Activated CD4-positive, alpha-beta memory T cell treated with anti-CD3 and anti-CD28 coated beads for 36 hours (primary cell): ENCODE measurements at regions of chr9 and their contacts with region 1.

Region 1: DNA sequence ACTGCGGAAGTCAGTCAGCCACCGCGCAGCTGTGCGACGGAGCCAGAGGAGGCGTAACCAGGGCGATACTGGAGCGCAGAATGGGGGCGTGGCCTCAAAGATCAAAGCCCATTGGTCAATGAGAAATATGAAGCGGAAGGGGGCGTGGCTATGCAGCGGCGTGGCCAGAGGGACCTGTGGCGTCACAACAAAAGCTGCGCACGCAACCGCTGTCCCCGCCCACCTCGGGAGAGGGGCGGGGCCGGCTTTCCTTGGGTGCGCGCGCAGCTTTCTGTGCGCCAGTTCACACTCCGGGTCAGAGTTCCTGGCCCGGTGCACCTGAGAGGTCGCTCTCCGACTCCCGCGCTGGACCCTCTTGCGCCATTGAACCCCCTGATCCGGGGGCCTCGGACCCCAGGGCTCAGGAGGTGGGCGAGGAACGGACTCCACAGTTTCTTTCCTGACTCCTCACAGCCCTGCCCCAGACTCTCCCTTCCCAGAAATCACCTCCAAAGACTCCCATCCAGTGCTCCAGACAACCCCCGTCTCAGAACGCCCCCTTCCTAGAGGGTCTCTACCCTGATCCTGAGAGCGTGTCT is at the starts of genes GOLGA2 and SWI5:
- DNase-seq: peak; percentile 100
- H3K4me3 Mint-ChIP-seq: peak within 1 kb of the TSS; percentile 97
- H3K27ac Mint-ChIP-seq: peak within 1 kb of the TSS; percentile 79
- H3K4me1 Mint-ChIP-seq: peaks cover 27% of the 10 kb centered on the region
- H3K27me3 Mint-ChIP-seq: no peaks in the 10 kb centered on the region
- total RNA-seq, gene GOLGA2: 34.4 to 42.9 TPM
- total RNA-seq, gene SWI5: 15.2 to 15.5 TPM

Region 2: GRCh38 chr9:128159784-128160602 is 116.1 kb before region 1 on chr9 and contains the start of gene BBLN:
- CTCF ChIA-PET with region 1: no interaction called
- POLR2A ChIA-PET with region 1: no interaction called
- intact Hi-C with region 1: loop called (anchors 1 kb)
- DNase-seq: peak; percentile 97
- H3K4me3 Mint-ChIP-seq: peak within 1 kb of the TSS; percentile 74
- H3K27ac Mint-ChIP-seq: peak within 1 kb of the TSS; percentile 82
- H3K4me1 Mint-ChIP-seq: peaks cover 24% of the 10 kb centered on the region
- H3K27me3 Mint-ChIP-seq: no peaks in the 10 kb centered on the region
- total RNA-seq, gene BBLN: 86.9 to 90.1 TPM

Region 3: DNA sequence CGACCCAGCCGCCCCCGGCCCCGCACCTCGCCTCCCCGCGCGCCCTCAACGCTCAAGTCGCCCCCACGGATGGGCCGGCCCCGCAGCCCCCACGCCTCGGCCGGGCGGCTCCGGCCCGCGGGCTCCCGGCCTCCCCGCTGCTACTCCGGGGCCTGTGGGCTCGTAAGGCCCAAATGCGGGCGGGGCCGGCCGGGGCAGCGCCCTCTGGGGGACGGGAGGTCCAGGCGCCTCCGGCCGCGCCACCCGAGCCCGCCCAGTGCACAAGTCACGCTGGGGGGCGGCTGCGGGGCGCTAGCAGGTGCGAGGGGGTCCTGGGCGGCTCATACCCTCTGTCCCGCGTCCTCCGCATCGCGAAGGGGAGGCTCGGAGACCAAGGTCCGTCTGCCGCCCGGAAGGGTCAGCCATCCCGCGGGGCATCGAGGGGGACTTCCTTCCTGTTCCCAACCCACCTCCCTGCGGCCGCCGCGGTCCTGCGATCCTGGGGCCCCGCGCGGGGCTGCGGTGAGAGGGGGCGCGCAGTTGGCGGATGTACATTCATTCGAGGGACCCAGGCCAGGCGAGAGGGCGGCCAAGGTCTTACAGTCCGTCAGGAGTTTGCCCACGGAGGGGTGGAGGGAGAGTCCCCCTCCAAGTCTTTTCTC is 84.6 kb before region 1 on chr9 and contains the start of gene CIZ1:
- CTCF ChIA-PET with region 1: no interaction called
- POLR2A ChIA-PET with region 1: no interaction called
- intact Hi-C with region 1: loop called (anchors 5 kb)
- DNase-seq: peak; percentile 76
- H3K4me3 Mint-ChIP-seq: peak within 1 kb of the TSS; percentile 99
- H3K27ac Mint-ChIP-seq: peak within 1 kb of the TSS; percentile 86
- H3K4me1 Mint-ChIP-seq: peaks cover 33% of the 10 kb centered on the region
- H3K27me3 Mint-ChIP-seq: no peaks in the 10 kb centered on the region
- total RNA-seq, gene CIZ1: 95.4 to 105 TPM

Region 4: DNA sequence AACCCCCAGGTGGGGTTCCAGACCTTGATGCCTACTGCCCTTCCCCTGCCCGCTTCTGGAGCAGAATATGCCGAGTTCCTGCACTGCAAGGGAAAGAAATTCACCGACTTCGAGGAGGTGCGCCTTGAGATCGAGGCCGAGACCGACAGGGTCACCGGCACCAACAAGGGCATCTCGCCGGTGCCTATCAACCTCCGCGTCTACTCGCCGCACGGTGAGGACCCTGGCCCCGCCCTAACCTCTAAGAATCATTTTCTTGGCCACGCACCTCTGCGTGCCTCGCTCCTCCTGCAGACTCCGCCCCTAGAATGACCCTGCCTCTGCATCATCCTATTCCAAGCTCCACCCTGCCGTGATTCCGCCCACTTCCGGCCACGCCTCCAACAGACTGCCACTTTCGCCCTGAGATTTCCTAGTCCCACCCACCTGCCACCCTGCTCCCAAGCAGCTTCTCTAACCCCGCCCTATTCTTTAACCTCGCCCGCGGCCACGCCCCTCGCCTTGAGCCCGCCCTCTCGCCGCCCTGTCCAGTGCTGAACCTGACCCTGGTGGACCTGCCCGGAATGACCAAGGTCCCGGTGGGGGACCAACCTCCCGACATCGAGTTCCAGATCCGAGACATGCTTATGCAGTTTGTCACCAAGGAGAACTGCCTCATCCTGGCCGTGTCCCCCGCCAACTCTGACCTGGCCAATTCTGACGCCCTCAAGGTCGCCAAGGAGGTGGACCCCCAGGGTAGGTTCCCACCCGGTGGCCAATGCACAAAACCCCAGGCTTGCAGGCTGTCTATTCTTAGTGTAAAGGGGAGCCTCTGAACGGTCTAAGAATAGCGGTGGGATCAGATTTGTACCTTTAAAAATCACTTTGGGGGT is 57.3 kb before region 1 on chr9:
- CTCF ChIA-PET with region 1: no interaction called
- POLR2A ChIA-PET with region 1: no interaction called
- intact Hi-C with region 1: loop called (anchors 1 kb)
- DNase-seq: peak; percentile 99
- H3K4me3 Mint-ChIP-seq: peak overlapping the region; percentile 70
- H3K27ac Mint-ChIP-seq: no peak overlapping the region
- H3K4me1 Mint-ChIP-seq: peaks cover 11% of the 10 kb centered on the region
- H3K27me3 Mint-ChIP-seq: peaks cover 3% of the 10 kb centered on the region

Region 5: GRCh38 chr9:128249908-128250838 is 25.9 kb before region 1 on chr9:
- CTCF ChIA-PET with region 1: interaction called, 5 read pairs
- POLR2A ChIA-PET with region 1: no interaction called
- intact Hi-C with region 1: loop called (anchors 2 kb)
- DNase-seq: peak; percentile 98
- H3K4me3 Mint-ChIP-seq: peak overlapping the region; percentile 78
- H3K27ac Mint-ChIP-seq: no peak overlapping the region
- H3K4me1 Mint-ChIP-seq: peaks cover 12% of the 10 kb centered on the region
- H3K27me3 Mint-ChIP-seq: peaks cover 8% of the 10 kb centered on the region

Region 6: GRCh38 chr9:128322404-128323211 is 46.5 kb after region 1 on chr9 and contains the starts of genes COQ4 and TRUB2:
- CTCF ChIA-PET with region 1: no interaction called
- POLR2A ChIA-PET with region 1: no interaction called
- intact Hi-C with region 1: loop called (anchors 1 kb)
- DNase-seq: peak; percentile 95
- H3K4me3 Mint-ChIP-seq: peak within 1 kb of the TSS; percentile 85
- H3K27ac Mint-ChIP-seq: peak within 1 kb of the TSS; percentile 94
- H3K4me1 Mint-ChIP-seq: peaks cover 17% of the 10 kb centered on the region
- H3K27me3 Mint-ChIP-seq: no peaks in the 10 kb centered on the region
- total RNA-seq, gene COQ4: 33.0 to 35.5 TPM
- total RNA-seq, gene TRUB2: 27.2 to 27.4 TPM

Region 7: DNA sequence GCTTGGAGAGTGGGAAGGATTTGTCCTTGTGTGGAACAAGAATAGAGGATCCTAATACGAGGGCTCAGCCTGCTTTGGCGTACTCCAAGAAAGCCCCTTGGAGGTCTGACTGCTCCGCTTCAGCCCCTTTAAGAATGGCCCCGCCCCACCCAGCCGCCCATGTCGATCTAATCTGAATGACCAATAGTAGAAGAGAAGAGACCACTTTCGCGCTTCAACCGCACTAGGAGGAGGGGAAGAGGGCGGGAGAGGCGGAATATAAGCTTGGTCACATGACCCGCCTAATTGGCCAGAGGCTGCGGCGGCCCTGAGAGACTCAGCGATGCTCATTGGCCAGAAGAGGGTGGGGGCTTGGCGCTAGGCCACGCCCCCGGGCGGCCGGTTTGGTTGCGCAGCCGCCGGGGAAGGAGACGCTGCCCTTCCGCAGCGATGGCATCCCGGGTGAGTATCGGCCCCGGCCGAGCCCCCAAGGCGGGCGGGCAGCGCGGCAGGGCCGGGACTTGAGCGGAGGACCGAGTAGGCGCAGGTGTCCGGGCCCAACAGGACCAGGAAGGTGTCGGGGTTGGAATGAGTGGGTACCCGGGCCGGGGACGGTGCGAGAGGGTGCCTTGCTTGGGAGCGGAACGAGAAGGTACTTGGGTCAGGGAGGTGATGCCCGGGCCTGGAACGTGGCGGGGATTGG is 760.3 kb after region 1 on chr9 and contains the start of gene MIGA2:
- CTCF ChIA-PET with region 1: no interaction called
- POLR2A ChIA-PET with region 1: no interaction called
- intact Hi-C with region 1: loop called (anchors 10 kb)
- DNase-seq: peak; percentile 97
- H3K4me3 Mint-ChIP-seq: peak within 1 kb of the TSS; percentile 98
- H3K27ac Mint-ChIP-seq: peak within 1 kb of the TSS; percentile 19
- H3K4me1 Mint-ChIP-seq: peaks cover 26% of the 10 kb centered on the region
- H3K27me3 Mint-ChIP-seq: no peaks in the 10 kb centered on the region
- total RNA-seq, gene MIGA2: 26.1 to 26.5 TPM